Activated CD4-positive, alpha-beta memory T cell treated with anti-CD3 and anti-CD28 coated beads, Interleukin-2, amount 10 ng/mL, durations not matched to agents 7 days and 5 days (primary cell): ENCODE measurements at regions of chr20 and their contacts with region 1.

Region 1: DNA sequence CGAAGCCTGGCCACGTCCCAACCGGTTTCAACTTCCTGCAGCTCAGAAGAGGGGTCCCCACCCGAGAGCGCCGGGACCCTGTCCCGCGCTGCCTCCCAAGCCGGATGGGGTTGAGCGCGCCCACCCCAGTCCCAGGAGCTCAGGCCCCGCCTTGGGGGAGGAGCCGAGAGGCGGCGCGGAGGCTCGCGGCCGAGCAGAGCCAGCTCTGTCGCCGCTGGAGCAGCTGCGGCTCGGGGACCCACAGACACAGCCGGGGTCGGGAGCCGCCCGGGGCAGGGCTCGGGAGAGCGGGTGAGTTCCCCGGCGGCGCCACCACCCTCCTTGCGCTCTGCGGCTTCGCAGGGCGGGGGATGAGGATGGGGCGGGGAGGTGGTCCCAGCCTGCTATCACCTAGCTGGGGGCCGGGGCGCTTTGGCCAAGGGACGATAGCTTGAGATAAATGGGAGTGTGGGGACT is at the start of gene PPP1R16B:
- DNase-seq: peak; percentile 88
- H3K4me3 Mint-ChIP-seq: peak within 1 kb of the TSS; percentile 91
- H3K27ac Mint-ChIP-seq: peak within 1 kb of the TSS; percentile 100
- H3K4me1 Mint-ChIP-seq: peaks cover 68% of the 10 kb centered on the region
- H3K27me3 Mint-ChIP-seq: no peaks in the 10 kb centered on the region
- total RNA-seq, gene PPP1R16B: 113 to 119 TPM

Region 2: DNA sequence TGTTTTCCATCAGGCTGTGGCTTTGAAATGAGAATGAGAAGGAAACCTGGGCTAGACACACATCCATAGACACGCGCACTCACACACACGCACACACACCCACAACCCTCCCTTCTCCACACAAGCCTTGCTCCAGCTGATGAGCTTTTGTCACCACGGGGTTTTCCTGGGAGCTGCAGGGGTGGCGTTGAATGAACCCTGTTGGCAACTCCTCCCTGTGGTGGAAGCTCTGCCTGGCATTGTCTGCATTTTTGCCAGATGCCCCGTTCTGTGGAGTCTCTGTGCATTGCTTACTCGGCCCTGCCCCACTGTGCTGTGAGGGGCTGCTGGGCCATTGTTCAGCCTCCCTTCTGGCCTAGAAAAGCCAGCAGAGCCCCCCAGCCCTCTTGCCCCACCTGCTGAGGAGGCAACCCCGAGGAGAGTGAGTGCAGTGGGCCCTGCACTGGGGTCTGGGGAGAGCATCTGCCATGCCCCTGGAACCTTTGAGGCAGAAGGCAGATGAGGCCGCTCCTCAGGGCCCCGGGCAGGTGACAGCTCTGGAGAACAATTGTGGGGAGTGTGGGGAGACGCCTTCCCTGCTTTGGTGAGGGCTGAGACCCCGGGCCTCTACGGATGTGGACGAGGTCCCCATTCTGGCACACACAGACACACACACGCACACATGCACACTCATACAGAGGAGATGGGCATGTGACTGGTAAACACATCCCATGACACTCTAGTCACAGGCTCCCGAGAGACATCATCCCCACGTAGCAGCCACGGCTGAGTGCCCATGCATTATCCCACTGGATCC is 214.7 kb before region 1 on chr20:
- CTCF ChIA-PET with region 1: no interaction called
- POLR2A ChIA-PET with region 1: no interaction called
- DNase-seq: no peak
- H3K4me3 Mint-ChIP-seq: no peak overlapping the region
- H3K27ac Mint-ChIP-seq: no peak overlapping the region
- H3K4me1 Mint-ChIP-seq: no peaks in the 10 kb centered on the region
- H3K27me3 Mint-ChIP-seq: peaks cover 4% of the 10 kb centered on the region

Region 3: GRCh38 chr20:38748097-38748860 is 57.3 kb before region 1 on chr20 and contains the start of gene ACTR5:
- CTCF ChIA-PET with region 1: interaction called, 14 read pairs
- POLR2A ChIA-PET with region 1: interaction called, 74 read pairs
- DNase-seq: peak; percentile 97
- H3K4me3 Mint-ChIP-seq: peak within 1 kb of the TSS; percentile 94
- H3K27ac Mint-ChIP-seq: peak within 1 kb of the TSS; percentile 92
- H3K4me1 Mint-ChIP-seq: peaks cover 27% of the 10 kb centered on the region
- H3K27me3 Mint-ChIP-seq: peaks cover 9% of the 10 kb centered on the region
- total RNA-seq, gene ACTR5: 9.4 to 9.9 TPM

Region 4: GRCh38 chr20:38836991-38837390 is 31.5 kb after region 1 on chr20:
- CTCF ChIA-PET with region 1: interaction called, 5 read pairs
- POLR2A ChIA-PET with region 1: interaction called, 57 read pairs
- DNase-seq: no peak
- H3K4me3 Mint-ChIP-seq: no peak overlapping the region
- H3K27ac Mint-ChIP-seq: no peak overlapping the region
- H3K4me1 Mint-ChIP-seq: peaks cover 53% of the 10 kb centered on the region
- H3K27me3 Mint-ChIP-seq: no peaks in the 10 kb centered on the region

Region 5: DNA sequence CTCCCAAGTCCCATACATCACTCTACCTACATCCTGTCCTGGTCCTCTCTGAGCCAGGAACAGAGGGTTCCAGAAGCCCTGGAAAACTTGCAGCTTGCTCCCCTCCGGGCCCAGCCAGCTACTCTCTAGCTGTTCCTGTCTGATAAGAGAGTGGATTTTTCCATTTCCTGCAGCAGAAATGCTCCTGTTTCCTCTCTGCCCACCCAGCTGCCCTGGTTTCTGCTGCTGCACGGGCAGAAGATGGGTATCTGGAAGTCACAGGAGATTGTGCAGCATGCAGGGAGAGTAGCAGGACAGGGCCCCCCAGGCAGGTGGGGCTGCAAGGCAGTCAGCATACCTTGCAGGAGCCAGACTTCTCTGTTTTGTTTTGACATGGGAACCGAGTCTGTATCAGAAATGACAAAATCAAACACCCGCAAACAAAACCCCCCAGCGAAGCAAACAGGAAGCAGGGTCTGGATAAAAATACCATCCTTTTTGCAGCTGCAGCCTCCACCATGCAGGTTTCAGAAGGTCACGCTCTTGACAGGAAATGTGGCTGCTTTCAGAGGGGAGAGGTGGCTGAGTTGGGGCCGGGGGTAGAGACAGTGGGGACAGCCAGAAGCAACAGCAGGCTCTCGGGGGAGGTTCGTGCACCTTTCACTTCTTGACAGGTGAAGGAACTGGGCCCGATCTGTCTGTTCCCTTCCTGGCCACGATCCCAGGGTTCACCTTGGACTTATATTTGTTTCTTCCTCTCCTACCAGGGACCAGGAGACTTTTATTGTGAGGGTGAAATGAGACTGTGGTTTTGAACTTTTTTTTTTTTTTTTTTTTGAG is 69.9 kb after region 1 on chr20:
- CTCF ChIA-PET with region 1: interaction called, 22 read pairs
- POLR2A ChIA-PET with region 1: interaction called, 125 read pairs
- DNase-seq: peak; percentile 70
- H3K4me3 Mint-ChIP-seq: peak overlapping the region; percentile 60
- H3K27ac Mint-ChIP-seq: peak overlapping the region; percentile 96
- H3K4me1 Mint-ChIP-seq: peaks cover 93% of the 10 kb centered on the region
- H3K27me3 Mint-ChIP-seq: no peaks in the 10 kb centered on the region

Region 6: GRCh38 chr20:38926142-38926933 is 120.8 kb after region 1 on chr20 and contains the start of gene FAM83D:
- CTCF ChIA-PET with region 1: no interaction called
- POLR2A ChIA-PET with region 1: interaction called, 14 read pairs
- DNase-seq: peak; percentile 98
- H3K4me3 Mint-ChIP-seq: peak within 1 kb of the TSS; percentile 81
- H3K27ac Mint-ChIP-seq: peak within 1 kb of the TSS; percentile 62
- H3K4me1 Mint-ChIP-seq: peaks cover 40% of the 10 kb centered on the region
- H3K27me3 Mint-ChIP-seq: no peaks in the 10 kb centered on the region
- total RNA-seq, gene FAM83D: 18.9 to 19.9 TPM